GM13976 (cell line): ENCODE measurements at regions of chr14 and their contacts with region 1.

Region 1: GRCh38 chr14:49892636-49893308 is at the start of gene ARF6:
- DNase-seq: peak; percentile 97
- CTCF ChIP-seq: peak; percentile 14

Region 2: DNA sequence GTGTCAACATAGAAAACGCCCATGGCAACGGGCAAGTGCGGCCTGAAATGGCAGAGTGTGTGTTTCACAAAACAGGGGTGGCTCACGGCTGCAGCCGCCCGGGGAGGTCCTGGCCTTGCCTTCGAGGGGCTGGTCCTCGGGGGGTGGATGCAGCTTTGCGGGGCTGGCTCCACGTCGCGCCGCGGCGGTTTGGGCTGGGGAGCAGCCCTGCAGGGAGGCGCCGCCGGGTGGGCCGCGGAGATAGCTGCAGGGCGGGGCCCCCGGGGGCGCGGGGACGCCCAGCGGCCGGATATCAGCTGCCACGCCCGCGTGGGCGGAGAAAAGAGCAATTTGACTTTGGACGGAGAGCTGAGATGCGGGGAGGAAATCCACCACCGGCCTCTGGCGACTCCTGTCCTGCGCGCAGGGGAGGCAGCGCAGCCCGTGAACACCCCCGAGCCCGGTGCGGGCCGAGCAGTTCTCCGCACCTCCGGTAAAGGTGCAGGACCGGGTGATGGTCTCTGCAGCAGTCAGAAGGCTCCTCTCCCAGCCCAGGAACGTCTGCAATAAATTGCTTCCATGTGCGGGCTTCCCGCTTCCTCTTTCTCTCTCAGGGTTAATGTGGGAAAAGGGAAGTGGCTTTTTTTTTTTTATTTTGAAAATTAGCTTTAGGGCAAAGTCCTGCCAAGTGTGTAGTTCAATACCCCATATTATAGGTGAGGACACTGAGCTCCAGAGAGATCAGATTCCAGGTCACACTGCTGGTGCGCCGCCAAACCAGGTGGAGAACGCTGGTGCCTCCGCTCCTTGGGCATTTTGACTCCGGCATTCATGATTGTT is 110.7 kb after region 1 on chr14:
- in situ Hi-C with region 1: loop called (anchors 10 kb)
- DNase-seq: peak; percentile 91
- CTCF ChIP-seq: no peak

Region 3: DNA sequence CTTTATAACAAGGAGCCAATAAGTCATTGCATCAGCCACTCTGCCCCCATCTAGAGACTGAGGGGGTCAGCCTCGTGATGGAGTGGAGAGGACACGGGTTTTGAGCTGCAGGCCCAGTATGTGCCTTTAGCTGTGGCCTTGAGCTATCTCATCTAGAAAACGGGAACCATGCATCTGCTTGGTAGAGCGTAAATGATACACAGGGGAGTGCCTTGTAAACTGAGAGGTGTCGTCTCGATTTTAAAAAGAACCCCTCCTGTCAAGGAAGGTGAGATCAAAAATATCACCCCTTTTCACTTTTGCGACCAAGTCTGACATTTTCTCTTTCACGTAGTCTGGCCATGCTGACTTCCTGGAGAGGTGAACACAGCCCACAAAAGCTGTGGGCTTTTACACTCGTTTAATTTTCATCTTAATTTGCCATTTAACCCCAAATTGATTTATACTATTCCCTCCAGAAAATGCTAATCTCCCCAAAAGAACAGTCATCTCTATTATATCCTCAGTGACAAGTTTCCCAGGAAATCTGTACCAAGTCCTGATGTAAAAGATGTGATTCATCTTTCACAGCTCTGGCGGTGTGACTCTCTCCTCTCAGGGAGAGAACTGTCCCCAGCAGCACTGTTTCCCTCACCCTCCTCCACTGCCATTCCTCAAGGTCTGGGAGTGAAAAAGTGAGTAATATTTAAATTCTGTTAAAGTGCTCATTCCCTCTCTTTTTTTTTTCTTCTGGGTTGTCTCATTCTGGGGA is 193.0 kb after region 1 on chr14:
- in situ Hi-C with region 1: loop called (anchors 10 kb)
- DNase-seq: peak; percentile 61
- CTCF ChIP-seq: no peak